ENCODE measurements at regions of chr12 and their contacts with region 1.

Region 1: GRCh38 chr12:42332301-42333285 is 6.6 kb downstream of the PPHLN1 start:
- DNase-seq: no peak
- ATAC-seq: peak; percentile 63 to 76 (median 74)
- H3K4me3 ChIP-seq: no peak overlapping the region
- H3K27ac ChIP-seq: no peak overlapping the region
- H3K4me1 ChIP-seq: peaks cover 0 to 6% (median 1%) of the 10 kb centered on the region in 4 donors
- H3K27me3 ChIP-seq: no peaks in the 10 kb centered on the region
- CTCF ChIP-seq: peak; percentile 63 to 70 (median 66)
- POLR2A ChIP-seq: no peak

Region 2: DNA sequence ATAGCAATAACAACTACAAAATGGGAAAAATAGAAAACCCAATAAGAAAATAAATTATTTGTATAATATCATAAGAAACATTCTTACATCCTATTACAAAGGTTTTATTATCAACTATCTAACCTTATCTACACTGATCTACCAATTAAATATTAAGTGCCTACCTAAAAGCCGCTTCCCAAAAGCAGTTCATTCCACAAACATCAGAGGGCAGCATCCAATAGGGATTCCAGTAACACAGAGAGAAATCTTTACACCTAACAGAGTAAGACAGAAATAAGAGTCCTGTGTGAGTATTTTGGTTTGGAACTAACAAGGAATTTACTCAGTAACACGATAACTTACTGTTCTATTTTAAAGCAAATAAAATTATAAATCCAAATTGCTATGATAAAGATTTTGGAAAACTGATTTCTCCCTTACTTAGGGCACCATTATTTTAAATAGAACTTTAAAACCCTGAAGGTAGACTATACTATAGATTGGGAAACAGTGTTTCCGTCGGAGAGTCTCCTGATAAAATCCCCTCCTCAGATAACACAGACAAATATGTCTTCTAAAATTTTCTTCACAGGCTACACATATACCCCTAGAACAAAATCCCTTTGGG is 202.9 kb before region 1 on chr12:
- intact Hi-C with region 1: loop called (anchors 5 kb)
- DNase-seq: no peak
- ATAC-seq: peak; percentile 80 to 87 (median 84)
- H3K4me3 ChIP-seq: no peak overlapping the region
- H3K27ac ChIP-seq: no peak overlapping the region
- H3K4me1 ChIP-seq: peaks cover 0 to 33% (median 14%) of the 10 kb centered on the region in 4 donors
- H3K27me3 ChIP-seq: no peaks in the 10 kb centered on the region
- CTCF ChIP-seq: peak; percentile 85 to 88 (median 87)
- POLR2A ChIP-seq: no peak

Region 3: DNA sequence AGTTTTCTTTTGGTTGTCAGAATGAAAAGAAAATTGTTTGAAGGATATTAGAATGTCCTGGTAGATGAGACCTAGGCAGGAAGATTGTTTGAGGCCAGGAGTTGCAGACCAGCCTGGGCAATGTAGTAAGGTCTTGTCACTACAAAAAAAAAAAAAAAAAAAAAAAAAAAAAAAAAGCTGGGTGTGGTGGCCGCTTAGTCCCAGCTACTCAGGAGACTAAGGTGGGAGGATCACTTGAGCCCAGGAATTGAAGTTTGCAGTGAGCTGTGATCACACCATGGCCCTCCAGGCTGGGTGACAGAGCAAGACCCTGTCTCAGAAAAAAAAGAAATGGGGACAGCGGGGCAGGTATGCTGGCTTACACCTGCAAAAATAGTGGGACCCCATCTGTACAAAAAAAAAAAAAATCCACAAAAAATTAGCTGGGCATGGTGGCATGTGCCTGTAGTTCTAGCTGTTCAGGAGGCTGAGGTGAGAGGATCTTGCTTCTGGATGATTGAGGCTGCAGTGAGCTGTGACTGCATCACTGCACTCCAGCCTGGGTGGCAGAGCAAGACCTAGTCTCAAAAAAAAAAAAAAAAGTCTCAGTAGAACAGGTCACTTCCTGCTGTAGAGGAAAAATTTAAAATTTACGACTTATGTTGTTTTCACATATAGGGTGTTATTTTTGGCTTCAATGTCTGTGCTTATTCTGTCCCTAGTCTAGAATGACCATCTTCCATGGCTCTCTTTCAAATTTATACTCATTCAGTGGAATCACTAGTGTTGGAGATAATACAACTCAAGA is 64.1 kb after region 1 on chr12:
- intact Hi-C with region 1: no loop called
- DNase-seq: no peak
- ATAC-seq: no peak
- H3K4me3 ChIP-seq: no peak overlapping the region
- H3K27ac ChIP-seq: no peak overlapping the region
- H3K4me1 ChIP-seq: no peaks in the 10 kb centered on the region
- H3K27me3 ChIP-seq: no peaks in the 10 kb centered on the region
- CTCF ChIP-seq: no peak
- POLR2A ChIP-seq: no peak

Region 4: DNA sequence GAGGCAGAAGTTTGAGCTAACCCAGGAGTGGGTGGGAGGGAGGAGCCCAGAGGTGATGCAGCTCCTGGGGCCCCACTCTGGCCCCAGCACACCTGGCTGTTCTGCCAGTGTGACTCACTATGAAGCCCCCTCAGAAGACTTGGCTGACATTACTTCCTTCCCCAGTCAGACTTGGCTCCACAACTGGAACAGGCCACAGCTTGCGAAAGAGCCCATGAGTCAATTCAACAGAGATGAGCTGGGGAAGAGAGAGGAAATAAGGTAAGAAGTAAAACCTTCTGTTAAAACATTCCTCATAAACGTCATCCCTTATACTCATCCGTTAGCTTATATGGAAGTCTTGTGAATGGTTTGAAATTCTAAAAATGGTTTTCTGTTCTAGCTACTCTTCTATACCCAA is 973.5 kb after region 1 on chr12:
- intact Hi-C with region 1: no loop called
- DNase-seq: no peak
- ATAC-seq: no peak
- H3K4me3 ChIP-seq: no peak overlapping the region
- H3K27ac ChIP-seq: no peak overlapping the region
- H3K4me1 ChIP-seq: no peaks in the 10 kb centered on the region
- H3K27me3 ChIP-seq: no peaks in the 10 kb centered on the region
- CTCF ChIP-seq: no peak
- POLR2A ChIP-seq: no peak

Measured in right lobe of liver (tissue), 6 donors.